Activated CD4-positive, alpha-beta memory T cell treated with anti-CD3 and anti-CD28 coated beads, Interleukin-2, amount 10 ng/mL, durations not matched to agents 7 days and 5 days (primary cell): ENCODE measurements at regions of chr10 and their contacts with region 1.

Region 1: DNA sequence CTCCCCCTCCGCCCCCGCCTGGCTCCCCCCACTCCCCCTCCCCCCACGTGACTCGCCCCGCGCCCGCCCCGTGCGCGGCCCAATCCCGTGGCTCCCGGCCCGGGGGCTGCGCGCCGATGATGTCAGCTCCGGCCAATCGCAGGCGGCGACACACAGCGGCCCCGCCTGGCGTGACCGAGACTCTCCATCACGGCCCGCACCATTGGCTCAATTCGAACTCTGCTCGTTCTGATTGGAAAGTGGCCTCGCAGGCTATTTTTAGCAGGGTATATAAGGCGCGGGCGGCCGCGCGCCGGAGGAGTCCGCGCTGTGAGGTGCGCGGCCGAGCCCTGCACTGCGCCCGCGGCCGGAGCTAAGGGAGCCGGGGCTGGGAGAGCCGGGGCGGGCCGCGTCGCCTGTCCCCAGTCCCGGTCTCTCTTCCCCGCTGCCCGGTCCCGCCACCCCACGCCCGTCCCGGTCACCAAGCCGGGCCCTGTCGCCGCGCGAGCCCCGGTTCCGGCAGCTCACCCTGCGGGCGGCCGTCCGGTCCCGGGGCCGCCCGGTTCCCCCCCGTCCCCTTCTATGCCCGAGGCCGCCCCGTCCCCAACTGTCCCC is 345 bp upstream of the KLF6 start:
- DNase-seq: peak; percentile 100
- H3K4me3 Mint-ChIP-seq: peak overlapping the region; percentile 97
- H3K27ac Mint-ChIP-seq: peak overlapping the region; percentile 98
- H3K4me1 Mint-ChIP-seq: peaks cover 25% of the 10 kb centered on the region
- H3K27me3 Mint-ChIP-seq: peaks cover 3% of the 10 kb centered on the region

Region 2: DNA sequence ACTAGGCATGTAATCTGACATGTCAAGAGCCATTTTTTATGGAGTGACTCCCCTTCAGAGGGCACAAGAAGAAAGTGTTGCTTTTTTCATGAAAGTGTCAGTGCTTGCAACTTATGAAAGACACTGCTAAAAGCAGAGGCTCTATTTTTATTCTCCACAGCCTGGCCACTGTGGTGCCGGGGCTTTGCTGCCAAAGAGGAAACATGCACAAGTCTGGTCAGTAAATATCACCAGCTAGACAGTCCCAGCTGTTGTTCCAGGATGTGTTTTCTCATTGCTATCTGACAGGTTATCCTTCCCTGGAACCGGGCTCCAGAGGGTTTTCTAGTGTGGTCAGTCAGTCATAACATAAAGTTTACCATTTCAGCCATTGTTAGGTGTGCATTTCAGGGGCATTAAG is 432.1 kb before region 1 on chr10:
- CTCF ChIA-PET with region 1: no interaction called
- POLR2A ChIA-PET with region 1: no interaction called
- DNase-seq: no peak
- H3K4me3 Mint-ChIP-seq: no peak overlapping the region
- H3K27ac Mint-ChIP-seq: no peak overlapping the region
- H3K4me1 Mint-ChIP-seq: no peaks in the 10 kb centered on the region
- H3K27me3 Mint-ChIP-seq: peaks cover 26% of the 10 kb centered on the region

Region 3: DNA sequence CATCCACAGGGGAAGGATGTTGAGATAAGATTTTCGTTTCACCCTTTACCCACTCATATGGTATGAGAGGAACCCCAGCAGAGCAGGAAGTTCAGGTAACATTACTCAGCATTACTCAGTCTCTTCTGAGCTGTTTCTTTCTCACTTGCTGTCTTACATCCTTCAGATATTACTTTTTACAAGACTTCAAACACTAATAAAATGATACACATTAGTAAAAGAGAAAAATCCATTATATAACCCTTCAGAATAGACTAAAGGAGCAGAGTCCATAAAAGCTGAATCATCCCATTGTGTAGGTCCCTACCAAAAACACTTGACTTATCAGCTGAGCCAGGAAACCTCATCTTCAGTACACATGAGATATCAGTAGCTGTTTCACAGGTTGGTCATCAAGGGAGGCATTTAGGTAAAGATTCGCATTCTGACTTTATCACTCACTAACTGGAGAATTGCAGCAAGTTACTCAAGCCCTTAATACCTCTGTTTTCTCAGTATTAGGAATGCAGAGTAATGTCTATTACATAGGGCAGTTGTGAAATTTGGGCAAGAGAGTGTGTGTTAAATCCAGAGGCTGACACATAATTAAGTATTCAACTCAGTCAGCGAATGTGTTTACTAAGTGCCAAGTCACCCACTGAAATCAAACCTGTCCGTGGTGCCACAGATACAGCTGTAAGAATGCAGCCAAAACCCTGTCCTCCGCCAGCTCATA is 45.0 kb before region 1 on chr10:
- CTCF ChIA-PET with region 1: no interaction called
- POLR2A ChIA-PET with region 1: interaction called, 63 read pairs
- DNase-seq: no peak
- H3K4me3 Mint-ChIP-seq: no peak overlapping the region
- H3K27ac Mint-ChIP-seq: peak overlapping the region; percentile 80
- H3K4me1 Mint-ChIP-seq: peaks cover 34% of the 10 kb centered on the region
- H3K27me3 Mint-ChIP-seq: peaks cover 2% of the 10 kb centered on the region

Region 4: DNA sequence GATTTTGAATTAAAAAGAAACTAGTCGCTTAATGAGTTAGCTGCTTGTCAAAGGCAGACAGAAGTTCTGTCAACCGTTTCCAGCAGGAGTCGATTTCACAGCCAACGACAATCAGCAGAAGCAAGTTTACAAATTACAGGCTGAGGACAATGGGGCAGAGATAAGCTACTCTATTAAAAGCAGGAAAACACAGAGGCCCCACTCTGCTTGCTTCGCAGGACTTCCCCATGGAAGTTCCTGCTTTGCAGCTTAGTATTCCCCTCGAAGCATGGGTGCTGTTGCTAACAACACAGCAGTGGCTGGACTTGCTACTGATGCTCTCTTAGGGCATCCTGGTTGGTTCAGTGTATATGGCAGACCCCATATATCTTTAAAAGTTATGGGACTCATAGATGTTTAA is 50.4 kb after region 1 on chr10:
- CTCF ChIA-PET with region 1: no interaction called
- POLR2A ChIA-PET with region 1: interaction called, 117 read pairs
- DNase-seq: no peak
- H3K4me3 Mint-ChIP-seq: no peak overlapping the region
- H3K27ac Mint-ChIP-seq: no peak overlapping the region
- H3K4me1 Mint-ChIP-seq: peaks cover 42% of the 10 kb centered on the region
- H3K27me3 Mint-ChIP-seq: no peaks in the 10 kb centered on the region

Region 5: DNA sequence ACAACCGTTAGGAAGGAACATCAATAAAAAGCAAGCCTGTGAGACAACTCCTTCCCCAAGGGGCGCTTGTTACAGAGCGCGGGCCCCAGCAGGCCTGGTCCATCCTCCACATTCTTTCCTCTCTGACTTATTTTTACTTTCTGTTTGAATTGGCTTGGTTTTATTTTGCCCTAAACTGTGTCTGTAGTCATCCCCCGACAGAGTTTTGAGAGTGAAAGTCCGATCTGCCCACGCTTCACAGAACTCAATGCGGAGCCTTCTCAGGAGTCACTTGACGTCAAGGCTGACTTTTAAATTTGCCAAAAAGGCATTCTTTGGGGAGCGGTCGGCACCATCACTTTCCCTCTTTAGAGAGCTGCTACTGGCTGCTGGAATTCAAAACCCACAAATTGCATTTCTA is 149.8 kb after region 1 on chr10:
- CTCF ChIA-PET with region 1: no interaction called
- POLR2A ChIA-PET with region 1: interaction called, 74 read pairs
- DNase-seq: peak; percentile 81
- H3K4me3 Mint-ChIP-seq: peak overlapping the region; percentile 58
- H3K27ac Mint-ChIP-seq: peak overlapping the region; percentile 86
- H3K4me1 Mint-ChIP-seq: peaks cover 50% of the 10 kb centered on the region
- H3K27me3 Mint-ChIP-seq: no peaks in the 10 kb centered on the region

Region 6: DNA sequence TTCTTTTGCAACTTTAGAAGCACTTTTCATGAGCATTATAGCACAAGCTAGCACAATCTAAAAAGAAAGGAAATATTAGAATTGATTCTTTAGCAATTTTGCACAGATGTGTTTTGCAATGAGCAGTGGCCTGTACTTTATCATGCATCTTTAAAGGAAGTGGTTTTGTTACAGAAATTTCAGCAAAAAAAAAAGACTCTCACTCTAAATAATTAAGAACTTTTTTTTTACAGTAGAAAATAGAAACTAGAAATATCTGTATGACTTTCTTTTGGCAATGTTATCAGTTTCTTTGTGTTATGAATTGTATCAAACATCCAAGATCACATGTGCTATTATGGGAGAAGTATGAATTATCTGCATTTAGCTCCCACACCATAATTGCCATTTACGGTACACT is 195.3 kb after region 1 on chr10:
- CTCF ChIA-PET with region 1: no interaction called
- POLR2A ChIA-PET with region 1: interaction called, 155 read pairs
- DNase-seq: no peak
- H3K4me3 Mint-ChIP-seq: peak overlapping the region; percentile 43
- H3K27ac Mint-ChIP-seq: peak overlapping the region; percentile 74
- H3K4me1 Mint-ChIP-seq: peaks cover 43% of the 10 kb centered on the region
- H3K27me3 Mint-ChIP-seq: peaks cover 3% of the 10 kb centered on the region

Region 7: DNA sequence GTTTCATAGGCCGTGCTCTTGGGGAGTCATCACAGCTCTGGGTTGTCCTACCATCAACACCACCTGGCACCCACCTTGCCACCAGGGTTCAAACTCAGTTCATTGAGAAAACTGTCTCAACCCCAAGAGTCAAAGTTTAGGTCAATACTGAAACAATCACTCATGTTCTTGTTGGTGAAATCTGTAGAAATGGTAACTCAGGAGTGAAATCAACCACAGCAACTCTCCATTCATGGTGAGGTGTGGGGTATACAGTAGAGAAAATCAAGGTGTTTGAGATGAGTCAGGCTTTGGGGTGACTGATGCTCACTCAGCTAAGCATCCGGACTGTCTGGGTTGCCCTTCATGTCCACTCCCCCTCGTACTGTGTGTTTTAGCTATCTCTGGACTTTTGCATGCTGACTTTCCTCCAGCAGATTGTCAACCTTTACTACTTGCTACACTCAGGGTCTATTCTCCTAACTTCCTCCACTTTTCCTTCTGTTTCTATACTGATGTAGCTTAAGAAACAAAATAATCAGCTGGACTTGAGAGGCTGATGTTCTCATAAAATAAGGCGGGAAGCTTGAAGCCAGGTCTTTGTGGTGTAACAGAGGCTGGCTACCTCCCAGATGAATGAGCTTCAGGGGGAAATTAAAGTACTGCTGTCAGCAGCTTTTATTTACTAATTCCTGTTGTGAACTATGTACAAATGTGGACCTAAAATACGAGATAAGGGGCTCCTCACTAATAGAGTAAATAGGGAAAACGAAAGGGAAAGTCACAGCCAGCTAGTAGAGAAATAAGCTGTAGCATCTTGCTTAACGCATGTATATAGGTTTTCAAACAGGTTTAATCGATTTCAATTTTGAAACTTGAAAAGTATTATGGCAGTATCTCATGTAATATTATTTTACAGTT is 867.0 kb after region 1 on chr10:
- CTCF ChIA-PET with region 1: interaction called, 4 read pairs
- POLR2A ChIA-PET with region 1: interaction called, 17 read pairs
- DNase-seq: no peak
- H3K4me3 Mint-ChIP-seq: no peak overlapping the region
- H3K27ac Mint-ChIP-seq: peak overlapping the region; percentile 41
- H3K4me1 Mint-ChIP-seq: peaks cover 32% of the 10 kb centered on the region
- H3K27me3 Mint-ChIP-seq: peaks cover 4% of the 10 kb centered on the region